ENCODE measurements at regions of chr21 and their contacts with region 1.

Region 1: GRCh38 chr21:23968722-23969647 is 1638.3 kb downstream of the MRPL39 start:
- DNase-seq: peak; percentile 93
- ATAC-seq: peak; percentile 91
- H3K4me3 ChIP-seq: peak overlapping the region; percentile 47
- H3K27ac ChIP-seq: no peak overlapping the region
- H3K4me1 ChIP-seq: peaks cover 7% of the 10 kb centered on the region
- H3K27me3 ChIP-seq: no peaks in the 10 kb centered on the region
- CTCF ChIP-seq: peak; percentile 90

Region 2: GRCh38 chr21:23162198-23162946 is 806.6 kb before region 1 on chr21:
- CTCF ChIA-PET with region 1: no interaction called
- POLR2A ChIA-PET with region 1: no interaction called
- intact Hi-C with region 1: loop called (anchors 10 kb)
- DNase-seq: peak; percentile 82
- ATAC-seq: peak; percentile 99
- H3K4me3 ChIP-seq: peak overlapping the region; percentile 7; the same call in 1 of the 2 replicates
- H3K27ac ChIP-seq: peak overlapping the region; percentile 94
- H3K4me1 ChIP-seq: peaks cover 22% of the 10 kb centered on the region
- H3K27me3 ChIP-seq: no peaks in the 10 kb centered on the region
- CTCF ChIP-seq: no peak

Region 3: GRCh38 chr21:23471877-23472276 is 497.1 kb before region 1 on chr21:
- CTCF ChIA-PET with region 1: interaction called, 3 read pairs
- POLR2A ChIA-PET with region 1: no interaction called
- intact Hi-C with region 1: loop called (anchors 10 kb)
- DNase-seq: peak; percentile 42
- ATAC-seq: peak; percentile 85
- H3K4me3 ChIP-seq: no peak overlapping the region
- H3K27ac ChIP-seq: no peak overlapping the region
- H3K4me1 ChIP-seq: no peaks in the 10 kb centered on the region
- H3K27me3 ChIP-seq: no peaks in the 10 kb centered on the region
- CTCF ChIP-seq: no peak

Region 4: DNA sequence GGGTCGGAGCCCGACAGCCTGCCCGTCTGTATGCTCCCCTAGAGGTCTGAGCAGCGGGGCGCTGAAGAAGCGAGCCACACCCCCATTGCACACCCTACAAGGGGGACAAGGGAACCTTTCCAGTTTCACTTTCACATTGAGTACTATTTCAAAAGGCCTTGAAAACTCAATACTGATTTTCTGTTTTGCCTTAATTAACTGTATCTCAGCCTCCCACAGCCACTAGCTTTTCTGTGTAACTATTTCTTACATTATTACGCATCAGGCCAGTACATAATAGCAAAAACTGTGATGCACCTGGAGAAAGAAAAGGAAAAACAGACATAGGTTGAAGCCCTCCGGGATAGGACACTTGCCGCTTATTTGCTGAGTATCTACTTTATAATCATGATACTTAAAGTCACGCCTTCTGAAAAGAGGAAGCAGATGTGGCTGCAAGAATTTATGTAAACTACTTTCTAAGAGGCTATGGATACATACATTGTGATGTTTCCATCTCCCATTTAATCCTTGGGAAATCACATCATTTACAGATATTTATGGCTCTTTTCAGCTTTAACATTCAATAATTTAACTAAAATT is 81.2 kb before region 1 on chr21:
- CTCF ChIA-PET with region 1: interaction called, 12 read pairs
- POLR2A ChIA-PET with region 1: no interaction called
- intact Hi-C with region 1: no loop called
- DNase-seq: no peak
- ATAC-seq: no peak
- H3K4me3 ChIP-seq: no peak overlapping the region
- H3K27ac ChIP-seq: no peak overlapping the region
- H3K4me1 ChIP-seq: peaks cover 4% of the 10 kb centered on the region; the same call in 1 of the 2 replicates
- H3K27me3 ChIP-seq: no peaks in the 10 kb centered on the region
- CTCF ChIP-seq: no peak

Region 5: GRCh38 chr21:24023402-24023801 is 54.4 kb after region 1 on chr21:
- CTCF ChIA-PET with region 1: no interaction called
- POLR2A ChIA-PET with region 1: no interaction called
- intact Hi-C with region 1: loop called (anchors 2 kb)
- DNase-seq: peak; percentile 81
- ATAC-seq: peak; percentile 98
- H3K4me3 ChIP-seq: peak overlapping the region; percentile 5; the same call in 1 of the 2 replicates
- H3K27ac ChIP-seq: peak overlapping the region; percentile 76
- H3K4me1 ChIP-seq: peaks cover 15% of the 10 kb centered on the region
- H3K27me3 ChIP-seq: no peaks in the 10 kb centered on the region
- CTCF ChIP-seq: no peak

Region 6: DNA sequence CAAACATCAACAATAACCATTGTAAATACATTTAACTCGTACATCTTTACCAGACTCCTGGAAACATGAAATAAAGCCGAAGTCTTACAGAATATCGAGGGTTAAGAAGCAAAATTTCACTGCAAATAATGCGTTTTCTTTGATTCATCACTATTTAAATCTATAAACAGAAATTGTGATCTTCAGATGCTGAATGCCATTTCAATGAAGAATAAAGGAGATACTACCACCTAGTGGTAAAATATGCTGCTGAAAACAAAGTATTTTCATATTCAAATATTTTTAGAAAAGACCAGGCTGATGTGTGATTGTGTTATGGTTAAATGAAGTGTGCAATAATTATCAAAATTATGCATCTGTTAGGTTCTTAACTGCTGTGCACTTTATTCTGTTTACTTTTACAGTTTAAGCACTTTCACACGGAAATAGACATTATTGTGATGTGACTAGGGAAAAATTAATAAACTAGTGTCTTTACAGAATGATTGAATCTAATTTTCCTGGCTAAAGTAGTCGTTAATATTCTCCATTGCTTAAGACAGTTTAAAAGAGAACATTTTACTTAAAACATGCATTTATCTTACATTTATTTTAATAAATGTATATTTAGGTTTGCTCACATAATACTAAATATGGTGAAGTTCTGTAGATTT is 545.2 kb after region 1 on chr21:
- CTCF ChIA-PET with region 1: no interaction called
- POLR2A ChIA-PET with region 1: no interaction called
- intact Hi-C with region 1: loop called (anchors 10 kb)
- DNase-seq: peak; percentile 57
- ATAC-seq: no peak
- H3K4me3 ChIP-seq: no peak overlapping the region
- H3K27ac ChIP-seq: no peak overlapping the region
- H3K4me1 ChIP-seq: no peaks in the 10 kb centered on the region
- H3K27me3 ChIP-seq: no peaks in the 10 kb centered on the region
- CTCF ChIP-seq: peak; percentile 88

Measured in PC-3 (cell line).